Endothelial cell of umbilical vein (primary cell): ENCODE measurements at regions of chr7 and their contacts with region 1.

Region 1: DNA sequence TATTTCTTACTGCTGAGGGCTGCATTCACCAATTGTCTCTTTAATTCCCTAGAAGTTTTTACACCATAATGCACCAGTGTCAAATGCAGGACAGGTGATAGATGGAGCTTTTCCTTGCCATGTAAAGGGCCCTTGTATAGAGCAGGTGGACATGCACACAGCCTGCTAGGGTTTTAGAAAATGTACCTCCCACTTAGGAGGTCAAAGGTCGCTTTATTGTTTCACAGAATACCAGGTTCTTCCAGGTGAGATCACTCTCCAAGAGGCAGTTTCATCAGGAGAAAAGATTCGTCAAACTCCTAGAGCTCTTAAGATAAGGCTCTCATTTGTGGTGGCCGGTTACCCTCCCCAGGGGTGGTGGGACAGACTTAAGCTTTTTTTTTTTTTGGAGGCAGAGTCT is 215.8 kb downstream of the PHTF2 start:
- DNase-seq: no peak
- H3K4me3 ChIP-seq: no peak overlapping the region
- H3K27ac ChIP-seq: no peak overlapping the region
- H3K4me1 ChIP-seq: peaks cover 7% of the 10 kb centered on the region
- H3K27me3 ChIP-seq: peaks cover 0 to 4% of the 10 kb centered on the region in 2 experiments
- CTCF ChIP-seq: no peak
- POLR2A ChIP-seq: no peak

Region 2: DNA sequence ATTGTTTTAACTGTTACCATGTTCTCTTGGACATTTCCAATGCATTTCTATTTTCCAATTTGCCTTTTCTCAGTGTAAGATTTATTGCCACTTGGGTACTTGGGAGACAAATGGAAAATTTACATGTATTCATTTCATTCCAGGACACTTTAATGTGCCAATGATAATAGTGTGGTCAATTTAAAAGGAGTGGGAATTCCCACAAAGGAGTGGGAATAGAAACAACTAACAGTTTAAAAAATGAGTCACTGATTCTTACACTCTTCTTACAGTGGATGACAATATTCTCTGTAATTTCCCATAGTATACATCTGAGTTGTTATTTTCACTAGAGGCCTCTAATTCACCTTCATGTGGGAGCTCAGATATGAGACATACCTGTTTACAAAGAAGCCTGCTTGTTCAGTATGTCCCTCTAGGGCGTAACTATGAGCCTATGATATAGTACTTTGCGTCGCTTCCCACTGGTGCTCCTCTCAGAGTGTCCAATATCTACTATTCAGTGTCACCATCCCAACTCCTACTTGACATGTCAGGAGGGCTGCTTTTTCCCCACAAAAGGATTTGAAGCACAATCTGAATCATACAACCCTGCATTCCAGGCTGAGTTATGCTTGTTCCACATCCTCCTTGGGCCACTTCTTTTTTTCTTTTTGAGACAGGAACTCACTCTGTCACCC is 85.5 kb after region 1 on chr7:
- CTCF ChIA-PET with region 1: no interaction called
- POLR2A ChIA-PET with region 1: no interaction called
- dilution Hi-C with region 1: no loop called
- intact Hi-C with region 1: no loop called
- DNase-seq: peak; percentile 23
- H3K4me3 ChIP-seq: no peak overlapping the region
- H3K27ac ChIP-seq: no peak overlapping the region
- H3K4me1 ChIP-seq: no peaks in the 10 kb centered on the region
- H3K27me3 ChIP-seq: no peaks in the 10 kb centered on the region
- CTCF ChIP-seq: no peak
- POLR2A ChIP-seq: no peak

Region 3: DNA sequence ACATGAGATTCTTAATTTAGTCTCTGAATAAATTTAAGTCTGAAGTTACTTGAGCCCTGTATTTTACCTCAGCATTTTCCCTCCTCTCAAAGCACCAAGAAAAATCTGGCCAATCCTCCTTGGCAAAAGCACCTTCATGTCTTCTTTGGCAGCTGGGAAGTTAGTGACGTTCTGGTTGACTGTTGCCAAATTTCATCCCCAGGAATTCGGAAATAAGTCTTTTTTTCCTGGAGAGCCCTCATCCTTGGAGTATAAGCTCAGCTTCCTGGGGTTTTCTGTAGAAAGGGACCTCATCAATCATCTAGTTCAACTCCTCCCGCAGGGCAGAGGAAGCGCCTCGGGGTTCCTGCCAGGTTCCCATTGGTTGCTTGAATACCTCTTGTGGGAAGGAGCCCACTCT is 161.8 kb after region 1 on chr7:
- CTCF ChIA-PET with region 1: no interaction called
- POLR2A ChIA-PET with region 1: no interaction called
- dilution Hi-C with region 1: no loop called
- intact Hi-C with region 1: loop called (anchors 2 kb)
- DNase-seq: no peak
- H3K4me3 ChIP-seq: no peak overlapping the region
- H3K27ac ChIP-seq: no peak overlapping the region
- H3K4me1 ChIP-seq: no peaks in the 10 kb centered on the region
- H3K27me3 ChIP-seq: no peaks in the 10 kb centered on the region
- CTCF ChIP-seq: no peak
- POLR2A ChIP-seq: no peak

Region 4: GRCh38 chr7:79090543-79090942 is 1076.1 kb after region 1 on chr7:
- CTCF ChIA-PET with region 1: no interaction called
- POLR2A ChIA-PET with region 1: no interaction called
- dilution Hi-C with region 1: no loop called
- intact Hi-C with region 1: loop called (anchors 5 kb)
- DNase-seq: peak; percentile 33
- H3K4me3 ChIP-seq: no peak overlapping the region
- H3K27ac ChIP-seq: no peak overlapping the region
- H3K4me1 ChIP-seq: peaks cover 9% of the 10 kb centered on the region
- H3K27me3 ChIP-seq: no peaks in the 10 kb centered on the region
- CTCF ChIP-seq: no peak
- POLR2A ChIP-seq: no peak